MCF 10A (cell line): ENCODE measurements at regions of chr21 and their contacts with region 1.

Region 1: DNA sequence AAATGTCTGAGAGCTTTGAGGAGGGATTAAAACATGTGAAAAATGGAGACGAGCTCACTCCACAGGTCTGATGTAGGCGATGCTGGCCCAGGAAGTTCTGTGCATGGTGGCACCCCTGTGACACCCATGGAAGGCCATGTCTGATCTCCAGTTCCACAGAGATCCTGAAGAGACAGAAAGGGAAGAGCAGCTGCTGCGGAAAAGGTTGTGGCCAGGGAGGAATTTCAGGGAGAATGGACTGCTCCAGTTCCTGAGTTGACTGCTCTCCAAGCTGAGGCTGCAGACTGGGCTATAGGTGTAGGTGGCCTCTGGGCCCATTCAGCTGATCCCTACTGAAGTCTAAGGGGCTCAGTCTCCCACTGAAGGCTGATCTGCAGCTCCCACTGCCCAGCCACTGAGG is 89.1 kb downstream of the ETS2 start:
- DNase-seq: no peak
- H3K4me3 Mint-ChIP-seq: no peak overlapping the region
- H3K27ac Mint-ChIP-seq: no peak overlapping the region
- H3K4me1 Mint-ChIP-seq: peaks cover 21% of the 10 kb centered on the region
- H3K27me3 Mint-ChIP-seq: no peaks in the 10 kb centered on the region
- CTCF ChIP-seq: no peak

Region 2: DNA sequence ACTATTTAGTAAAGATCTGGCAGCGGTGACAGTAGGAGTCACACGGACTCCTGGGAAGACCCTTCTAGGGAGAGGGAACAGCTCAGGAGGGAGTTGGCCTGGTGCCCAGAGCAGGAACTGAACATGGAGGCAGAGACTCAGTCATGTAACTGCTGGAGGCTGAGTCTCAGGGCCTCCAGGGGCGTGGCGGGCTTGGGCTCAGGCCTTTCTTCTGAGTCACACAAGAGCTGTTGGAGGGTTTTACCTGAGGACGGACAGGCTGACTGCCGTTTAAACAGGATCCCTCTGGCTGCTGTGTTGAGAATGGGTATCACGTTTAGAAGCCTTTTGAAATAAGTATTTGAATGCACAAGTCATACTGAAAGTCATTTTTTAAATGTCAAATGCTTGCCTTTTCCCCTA is 96.4 kb before region 1 on chr21:
- CTCF ChIA-PET with region 1: no interaction called
- POLR2A ChIA-PET with region 1: no interaction called
- intact Hi-C with region 1: no loop called
- DNase-seq: peak; percentile 93
- H3K4me3 Mint-ChIP-seq: peak overlapping the region; percentile 30
- H3K27ac Mint-ChIP-seq: peak overlapping the region; percentile 85
- H3K4me1 Mint-ChIP-seq: peaks cover 36% of the 10 kb centered on the region
- H3K27me3 Mint-ChIP-seq: no peaks in the 10 kb centered on the region
- CTCF ChIP-seq: no peak

Region 3: DNA sequence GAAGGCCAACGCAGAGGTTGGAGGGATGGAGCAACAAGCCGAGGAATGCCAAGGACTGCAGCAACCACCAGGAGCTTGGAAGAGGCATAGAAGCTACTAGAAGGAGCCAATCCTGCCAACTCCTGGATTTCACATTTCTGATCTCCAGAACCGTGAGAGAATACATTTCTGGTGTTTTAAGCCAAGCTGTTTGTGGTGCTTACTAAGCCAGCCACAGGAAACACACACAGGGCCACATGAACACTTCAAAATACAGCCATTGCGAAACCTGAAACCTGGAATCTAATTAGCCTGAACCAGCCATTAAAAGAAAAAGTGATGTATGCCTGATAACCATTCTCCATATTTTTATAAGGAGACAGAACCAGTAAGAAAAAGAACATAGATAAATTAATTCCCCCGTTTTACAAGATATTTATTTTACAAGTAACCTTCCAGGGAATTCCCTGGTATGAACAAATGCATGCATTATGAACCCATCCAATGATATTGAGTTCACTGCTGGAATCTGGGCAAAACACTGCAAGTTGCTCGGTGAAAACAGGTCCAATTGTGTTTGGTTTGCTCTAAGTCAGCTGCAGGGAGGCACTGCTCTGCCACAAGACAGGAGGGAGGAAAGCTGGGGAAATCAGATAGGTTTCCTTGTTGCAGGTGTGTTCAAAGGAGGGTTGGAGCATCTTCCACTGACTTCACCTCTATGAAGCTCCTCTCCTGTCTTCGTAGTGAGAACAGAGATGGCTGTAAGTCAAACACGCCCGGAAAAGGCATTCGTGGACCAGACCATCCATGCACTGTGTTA is 19.0 kb before region 1 on chr21:
- CTCF ChIA-PET with region 1: interaction called, 3 read pairs
- POLR2A ChIA-PET with region 1: interaction called, 11 read pairs
- intact Hi-C with region 1: no loop called
- DNase-seq: peak; percentile 83
- H3K4me3 Mint-ChIP-seq: no peak overlapping the region
- H3K27ac Mint-ChIP-seq: peak overlapping the region; percentile 77
- H3K4me1 Mint-ChIP-seq: peaks cover 28% of the 10 kb centered on the region
- H3K27me3 Mint-ChIP-seq: no peaks in the 10 kb centered on the region
- CTCF ChIP-seq: no peak